Head of caudate nucleus (tissue), 42 donors: ENCODE measurements at regions of chr4 and their contacts with region 1.

Region 1: GRCh38 chr4:26860157-26860921 is at the start of gene STIM2:
- DNase-seq: peak; percentile 86 to 99 (median 97)

Region 2: DNA sequence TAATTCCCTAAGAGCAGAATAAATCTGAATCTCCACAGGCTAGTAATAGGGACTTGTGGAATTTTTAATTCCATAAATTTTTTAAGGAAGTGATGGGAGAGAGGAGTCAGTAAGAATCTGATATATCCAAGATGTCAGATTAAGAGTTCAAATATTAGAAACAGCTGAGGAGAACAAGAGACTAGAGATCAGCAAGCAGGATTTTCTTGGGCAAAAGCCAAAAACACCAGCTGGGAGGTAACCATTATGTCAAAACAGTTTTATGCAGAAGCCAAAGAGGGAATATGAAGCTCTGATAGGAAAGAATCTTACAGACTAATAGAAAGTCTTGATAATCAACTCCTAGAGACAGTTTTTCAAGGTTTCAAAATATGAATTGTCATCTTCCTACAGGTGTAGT is 611.7 kb before region 1 on chr4:
- intact Hi-C with region 1: no loop called
- DNase-seq: no peak

Region 3: GRCh38 chr4:26583865-26584652 is 276.3 kb before region 1 on chr4 and contains the start of gene TBC1D19:
- intact Hi-C with region 1: loop called (anchors 5 kb)
- DNase-seq: peak; percentile 81 to 97 (median 91)

Region 4: GRCh38 chr4:26896636-26897035 is 36.3 kb after region 1 on chr4:
- intact Hi-C with region 1: no loop called
- DNase-seq: no peak

Region 5: GRCh38 chr4:26992657-26993361 is 132.5 kb after region 1 on chr4:
- intact Hi-C with region 1: loop called (anchors 5 kb)
- DNase-seq: peak in 31 of 42 donors; percentile 1 to 61 (median 27)

Region 6: DNA sequence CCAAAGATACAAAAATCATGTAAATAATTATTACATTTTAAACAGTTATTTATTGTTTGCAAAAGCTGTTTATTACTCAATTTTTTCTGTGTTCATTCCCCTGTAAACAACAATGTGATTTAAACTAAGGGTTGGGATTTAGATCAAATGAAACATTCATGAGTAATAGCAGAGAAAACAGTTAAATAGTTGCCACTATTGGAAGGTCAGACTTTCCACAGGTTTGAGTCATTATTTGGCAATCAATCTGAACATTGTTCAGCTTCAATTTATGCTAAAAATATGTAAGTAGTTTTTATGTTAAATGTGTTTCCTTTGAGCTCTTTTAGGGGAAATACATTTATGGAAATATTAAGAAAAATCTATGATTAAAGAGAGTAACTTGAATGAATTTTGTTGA is 145.2 kb after region 1 on chr4:
- intact Hi-C with region 1: loop called (anchors 5 kb)
- DNase-seq: no peak

Region 7: GRCh38 chr4:27016551-27016950 is 156.2 kb after region 1 on chr4:
- intact Hi-C with region 1: no loop called
- DNase-seq: no peak